Ovary (tissue), 10 donors: ENCODE measurements at regions of chr15 and their contacts with region 1.

Region 1: DNA sequence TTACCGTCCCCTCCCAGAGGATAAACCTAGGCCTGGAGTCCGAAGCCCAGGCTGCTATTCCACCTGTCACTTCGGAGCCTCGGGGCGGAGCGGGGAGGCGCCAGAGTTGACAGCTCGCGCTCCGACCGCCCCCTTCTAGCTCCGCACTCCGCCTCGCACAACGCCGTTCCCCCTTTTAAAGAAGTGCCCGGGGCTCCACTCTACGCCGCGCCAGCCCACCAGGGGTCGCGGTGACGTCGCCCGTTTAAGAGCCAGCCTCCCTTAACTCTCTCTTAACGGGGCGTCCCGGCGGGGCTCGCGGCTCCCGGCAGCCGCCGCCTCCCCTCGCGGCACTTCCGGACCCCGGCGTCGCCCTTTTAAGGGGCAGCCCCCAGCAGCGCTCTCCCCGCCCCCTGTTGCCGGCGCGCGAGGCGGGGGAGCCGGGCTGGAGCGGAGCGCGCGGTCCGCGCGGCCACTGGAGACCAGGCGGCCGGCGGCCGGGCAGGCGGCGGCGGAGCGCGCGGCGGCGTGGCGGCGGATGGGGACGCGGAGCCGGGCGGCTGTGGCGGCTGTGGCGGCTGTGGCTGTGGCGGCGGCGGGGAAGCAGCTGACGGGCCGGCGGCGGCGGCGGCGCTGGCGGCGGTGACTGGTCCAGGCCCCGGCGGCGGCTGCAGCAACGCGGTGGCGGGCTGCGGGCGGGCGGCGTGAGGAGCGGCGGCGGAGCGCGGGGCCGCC is at the start of gene INAFM2:
- DNase-seq: peak; percentile 85 to 95 (median 91)
- H3K4me3 ChIP-seq: peak within 1 kb of the TSS; percentile 80
- H3K27ac ChIP-seq: peak within 1 kb of the TSS; percentile 37 to 72
- H3K4me1 ChIP-seq: peaks cover 7% of the 10 kb centered on the region
- H3K27me3 ChIP-seq: no peaks in the 10 kb centered on the region
- CTCF ChIP-seq: peak; percentile 70 to 86 (median 70)
- EP300 ChIP-seq: no peak
- POLR2A ChIP-seq: no peak
- total RNA-seq, gene INAFM2: 8.1 to 50.6 (median 30.6) TPM

Region 2: GRCh38 chr15:40357723-40358470 is 34.5 kb after region 1 on chr15 and contains the start of gene DISP2:
- intact Hi-C with region 1: loop called in 1 of 4 experiments (anchors 5 kb)
- DNase-seq: peak; percentile 85 to 92 (median 92)
- H3K4me3 ChIP-seq: peak within 1 kb of the TSS; percentile 33
- H3K27ac ChIP-seq: no peak within 1 kb of the TSS
- H3K4me1 ChIP-seq: no peaks in the 10 kb centered on the region
- H3K27me3 ChIP-seq: no peaks in the 10 kb centered on the region
- CTCF ChIP-seq: no peak
- EP300 ChIP-seq: no peak
- POLR2A ChIP-seq: no peak
- total RNA-seq, gene DISP2: 0.48 to 12.9 (median 1.5) TPM in 5 of 7 donors, not detected in the others